ENCODE measurements at regions of chr12 and their contacts with region 1.

Region 1: DNA sequence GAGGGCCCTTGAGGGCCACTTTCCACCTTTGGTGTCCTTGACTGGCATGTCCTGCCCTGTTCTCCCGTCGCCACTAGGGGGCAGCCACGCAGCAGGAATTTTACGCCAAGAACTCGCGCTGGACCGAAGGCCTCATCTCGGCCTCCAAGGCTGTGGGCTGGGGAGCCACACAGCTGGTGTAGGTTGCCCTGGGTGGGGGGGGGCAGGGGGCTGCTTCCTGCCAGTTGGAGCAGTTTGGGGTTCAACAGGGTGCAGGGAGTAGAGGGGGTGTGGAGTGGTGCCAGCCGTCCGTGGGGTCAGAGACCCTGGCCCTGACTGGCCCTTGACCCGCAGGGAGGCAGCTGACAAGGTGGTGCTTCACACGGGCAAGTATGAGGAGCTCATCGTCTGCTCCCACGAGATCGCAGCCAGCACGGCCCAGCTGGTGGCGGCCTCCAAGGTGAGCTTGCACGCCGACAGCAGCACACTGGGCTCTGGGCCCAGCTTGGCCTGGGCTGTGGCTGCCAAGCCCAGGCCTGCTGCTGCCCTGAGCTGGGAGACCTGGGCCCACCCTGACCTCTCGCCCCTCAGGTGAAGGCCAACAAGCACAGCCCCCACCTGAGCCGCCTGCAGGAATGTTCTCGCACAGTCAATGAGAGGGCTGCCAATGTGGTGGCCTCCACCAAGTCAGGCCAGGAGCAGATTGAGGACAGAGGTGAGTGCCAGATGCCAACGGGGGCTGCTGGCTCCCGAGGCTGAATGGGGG is 25.3 kb downstream of the HIP1R start:
- DNase-seq: peak; percentile 88
- ATAC-seq: peak; percentile 83
- H3K4me3 Mint-ChIP-seq: no peak overlapping the region
- H3K27ac Mint-ChIP-seq: no peak overlapping the region
- H3K4me1 Mint-ChIP-seq: no peaks in the 10 kb centered on the region
- H3K27me3 Mint-ChIP-seq: no peaks in the 10 kb centered on the region
- CTCF ChIP-seq: peak; percentile 91

Region 2: DNA sequence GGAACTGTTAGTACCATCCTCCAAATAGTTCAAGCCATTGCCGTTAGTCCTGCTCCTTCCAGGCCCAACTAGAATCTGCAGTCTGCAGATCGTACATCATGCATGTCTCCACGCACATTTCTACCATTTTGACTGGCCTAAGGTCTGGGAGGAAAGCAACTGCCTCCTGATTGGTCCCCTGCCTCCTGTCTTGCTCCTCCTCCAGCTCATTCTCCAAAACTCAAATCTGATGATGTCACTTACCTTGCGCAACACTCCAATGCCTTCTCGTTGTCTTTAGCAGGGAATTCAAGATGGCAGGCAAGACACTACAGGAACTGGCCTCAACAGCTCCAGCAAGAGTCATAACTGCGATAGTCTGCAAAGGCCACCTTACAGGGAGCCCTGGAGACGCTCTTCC is 120.2 kb before region 1 on chr12:
- CTCF ChIA-PET with region 1: no interaction called
- POLR2A ChIA-PET with region 1: no interaction called
- intact Hi-C with region 1: no loop called
- DNase-seq: no peak
- ATAC-seq: no peak
- H3K4me3 Mint-ChIP-seq: no peak overlapping the region
- H3K27ac Mint-ChIP-seq: no peak overlapping the region
- H3K4me1 Mint-ChIP-seq: peaks cover 4% of the 10 kb centered on the region
- H3K27me3 Mint-ChIP-seq: no peaks in the 10 kb centered on the region
- CTCF ChIP-seq: no peak

Region 3: GRCh38 chr12:122813310-122813713 is 47.2 kb before region 1 on chr12:
- CTCF ChIA-PET with region 1: no interaction called
- POLR2A ChIA-PET with region 1: no interaction called
- intact Hi-C with region 1: no loop called
- DNase-seq: no peak
- ATAC-seq: no peak
- H3K4me3 Mint-ChIP-seq: no peak overlapping the region
- H3K27ac Mint-ChIP-seq: no peak overlapping the region
- H3K4me1 Mint-ChIP-seq: no peaks in the 10 kb centered on the region
- H3K27me3 Mint-ChIP-seq: no peaks in the 10 kb centered on the region
- CTCF ChIP-seq: no peak

Region 4: GRCh38 chr12:122888232-122888867 is 27.8 kb after region 1 on chr12:
- CTCF ChIA-PET with region 1: interaction called, 15 read pairs
- POLR2A ChIA-PET with region 1: interaction called, 3 read pairs
- intact Hi-C with region 1: no loop called
- DNase-seq: peak; percentile 65
- ATAC-seq: peak; percentile 55
- H3K4me3 Mint-ChIP-seq: peak overlapping the region; percentile 69
- H3K27ac Mint-ChIP-seq: peak overlapping the region; percentile 93
- H3K4me1 Mint-ChIP-seq: peaks cover 93% of the 10 kb centered on the region
- H3K27me3 Mint-ChIP-seq: no peaks in the 10 kb centered on the region
- CTCF ChIP-seq: no peak